ENCODE measurements at regions of chr16 and their contacts with region 1.

Region 1: GRCh38 chr16:66696669-66697630 is at the start of gene CMTM4:
- DNase-seq: peak; percentile 76
- ATAC-seq: peak; percentile 96
- H3K4me3 Mint-ChIP-seq: peak within 1 kb of the TSS; percentile 80
- H3K27ac Mint-ChIP-seq: no peak within 1 kb of the TSS
- H3K4me1 Mint-ChIP-seq: peaks cover 15% of the 10 kb centered on the region
- H3K27me3 Mint-ChIP-seq: peaks cover 16% of the 10 kb centered on the region
- CTCF ChIP-seq: no peak
- total RNA-seq, gene CMTM4: 0.29 and 0.38 TPM in 2 replicates

Region 2: DNA sequence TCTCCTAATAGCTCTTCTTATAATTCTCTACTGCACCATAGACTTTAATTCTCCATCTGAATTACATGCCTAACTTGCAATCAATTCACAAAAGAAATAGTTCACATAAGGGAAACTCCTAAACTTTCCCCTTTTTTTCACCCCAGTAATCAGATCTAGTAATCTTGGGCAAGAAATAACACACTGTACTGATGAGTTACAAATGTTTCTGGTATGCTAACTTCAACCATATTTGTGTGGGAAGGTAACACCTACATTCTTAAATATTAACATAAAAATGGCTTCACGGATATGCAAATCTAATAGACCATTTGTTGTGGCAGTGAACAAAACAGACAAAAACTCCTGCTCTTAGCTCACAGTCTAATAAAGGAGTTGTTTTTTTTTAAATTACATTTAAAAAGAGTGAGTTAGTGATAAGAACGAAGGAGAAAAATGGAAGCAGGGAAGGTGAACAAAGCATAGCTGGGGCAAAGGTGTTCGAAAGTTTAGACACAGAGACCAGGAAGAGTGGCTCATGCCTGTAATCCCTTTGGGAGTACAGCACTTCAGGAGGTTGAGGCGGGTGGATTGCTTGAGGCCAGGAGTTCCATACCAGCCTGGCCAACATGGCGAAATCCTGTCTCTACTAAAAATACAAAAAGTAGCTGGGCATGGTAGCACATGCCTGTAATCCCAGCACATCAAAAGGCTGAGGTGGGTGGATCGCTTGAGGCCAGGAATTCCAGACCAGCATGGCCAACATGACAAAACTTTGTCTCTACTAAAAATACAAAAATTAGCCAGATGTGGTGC is 57.7 kb before region 1 on chr16:
- CTCF ChIA-PET with region 1: no interaction called
- POLR2A ChIA-PET with region 1: no interaction called
- intact Hi-C with region 1: no loop called
- DNase-seq: no peak
- ATAC-seq: no peak
- H3K4me3 Mint-ChIP-seq: no peak overlapping the region
- H3K27ac Mint-ChIP-seq: no peak overlapping the region
- H3K4me1 Mint-ChIP-seq: no peaks in the 10 kb centered on the region
- H3K27me3 Mint-ChIP-seq: peaks cover 20% of the 10 kb centered on the region
- CTCF ChIP-seq: no peak

Region 3: DNA sequence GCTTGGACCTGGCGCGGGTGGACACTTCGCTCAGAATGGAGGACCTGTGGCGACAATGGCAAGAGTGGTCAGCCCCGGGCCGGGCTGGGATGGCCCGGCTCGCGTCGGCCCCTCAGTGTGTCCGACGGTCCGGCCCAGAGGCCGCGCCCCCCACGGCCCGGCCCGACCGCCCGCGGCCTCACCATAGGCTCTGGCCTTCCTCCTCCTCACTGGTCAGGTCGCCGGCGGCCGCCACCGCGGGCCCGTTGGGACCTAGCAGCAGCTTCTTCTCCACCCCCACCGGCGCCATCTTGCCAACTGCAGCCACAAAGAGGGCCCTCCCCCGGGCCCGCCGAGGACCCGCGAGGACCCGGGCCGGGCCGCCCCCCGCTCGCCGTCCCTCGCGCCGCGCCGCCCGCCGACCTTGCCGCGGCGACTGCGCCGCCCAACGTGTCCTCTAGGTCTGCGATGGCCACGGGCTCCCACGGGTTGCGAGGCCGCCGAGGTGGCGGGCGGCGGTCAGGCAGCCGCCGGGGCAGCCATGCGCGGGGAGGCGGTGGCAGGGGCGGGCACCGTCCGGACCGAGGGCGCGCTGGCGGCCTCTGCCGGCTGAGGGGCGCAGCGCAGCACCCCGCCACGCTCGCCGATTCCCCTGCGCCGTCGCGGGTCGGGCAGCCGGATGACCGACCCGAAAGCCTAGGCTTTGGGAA is 54.5 kb after region 1 on chr16 and contains the start of gene DYNC1LI2:
- CTCF ChIA-PET with region 1: interaction called, 4 read pairs
- POLR2A ChIA-PET with region 1: no interaction called
- intact Hi-C with region 1: loop called (anchors 1 kb)
- DNase-seq: peak; percentile 92
- ATAC-seq: peak; percentile 96
- H3K4me3 Mint-ChIP-seq: peak within 1 kb of the TSS; percentile 88
- H3K27ac Mint-ChIP-seq: peak within 1 kb of the TSS; percentile 87
- H3K4me1 Mint-ChIP-seq: peaks cover 34% of the 10 kb centered on the region
- H3K27me3 Mint-ChIP-seq: peaks cover 7% of the 10 kb centered on the region
- CTCF ChIP-seq: no peak
- total RNA-seq, gene DYNC1LI2: 64.3 and 84.4 TPM in 2 replicates